ENCODE measurements at regions of chr1 and their contacts with region 1.

Region 1: GRCh38 chr1:182301467-182302198 is 90.0 kb downstream of the GLUL start:
- DNase-seq: peak; percentile 80
- H3K4me3 ChIP-seq: no peak overlapping the region
- H3K27ac ChIP-seq: no peak overlapping the region
- H3K4me1 ChIP-seq: peaks cover 3% of the 10 kb centered on the region
- H3K27me3 ChIP-seq: no peaks in the 10 kb centered on the region
- CTCF ChIP-seq: peak in 1 of 2 donors; percentile 45

Region 2: GRCh38 chr1:182397771-182398393 is 96.2 kb after region 1 on chr1:
- CTCF ChIA-PET with region 1: no interaction called
- dilution Hi-C with region 1: no loop called
- in situ Hi-C with region 1: no loop called
- intact Hi-C with region 1: loop called (anchors 1 kb)
- DNase-seq: peak; percentile 75
- H3K4me3 ChIP-seq: no peak overlapping the region
- H3K27ac ChIP-seq: no peak overlapping the region
- H3K4me1 ChIP-seq: peaks cover 18% of the 10 kb centered on the region
- H3K27me3 ChIP-seq: no peaks in the 10 kb centered on the region
- CTCF ChIP-seq: no peak

Region 3: GRCh38 chr1:182588500-182589452 is 287.1 kb after region 1 on chr1 and contains the start of gene RNASEL:
- CTCF ChIA-PET with region 1: no interaction called
- dilution Hi-C with region 1: no loop called
- in situ Hi-C with region 1: no loop called
- intact Hi-C with region 1: loop called (anchors 5 kb)
- DNase-seq: peak; percentile 75
- H3K4me3 ChIP-seq: peak within 1 kb of the TSS; percentile 69 to 77 (median 72)
- H3K27ac ChIP-seq: peak within 1 kb of the TSS; percentile 73
- H3K4me1 ChIP-seq: peaks cover 2% of the 10 kb centered on the region
- H3K27me3 ChIP-seq: no peaks in the 10 kb centered on the region
- CTCF ChIP-seq: no peak
- total RNA-seq, gene RNASEL: 3.0 to 3.5 TPM

Measured in mammary epithelial cell (primary cell).